Activated naive CD4-positive, alpha-beta T cell treated with anti-CD3 and anti-CD28 coated beads for 36 hours (primary cell): ENCODE measurements at regions of chr14 and their contacts with region 1.

Region 1: DNA sequence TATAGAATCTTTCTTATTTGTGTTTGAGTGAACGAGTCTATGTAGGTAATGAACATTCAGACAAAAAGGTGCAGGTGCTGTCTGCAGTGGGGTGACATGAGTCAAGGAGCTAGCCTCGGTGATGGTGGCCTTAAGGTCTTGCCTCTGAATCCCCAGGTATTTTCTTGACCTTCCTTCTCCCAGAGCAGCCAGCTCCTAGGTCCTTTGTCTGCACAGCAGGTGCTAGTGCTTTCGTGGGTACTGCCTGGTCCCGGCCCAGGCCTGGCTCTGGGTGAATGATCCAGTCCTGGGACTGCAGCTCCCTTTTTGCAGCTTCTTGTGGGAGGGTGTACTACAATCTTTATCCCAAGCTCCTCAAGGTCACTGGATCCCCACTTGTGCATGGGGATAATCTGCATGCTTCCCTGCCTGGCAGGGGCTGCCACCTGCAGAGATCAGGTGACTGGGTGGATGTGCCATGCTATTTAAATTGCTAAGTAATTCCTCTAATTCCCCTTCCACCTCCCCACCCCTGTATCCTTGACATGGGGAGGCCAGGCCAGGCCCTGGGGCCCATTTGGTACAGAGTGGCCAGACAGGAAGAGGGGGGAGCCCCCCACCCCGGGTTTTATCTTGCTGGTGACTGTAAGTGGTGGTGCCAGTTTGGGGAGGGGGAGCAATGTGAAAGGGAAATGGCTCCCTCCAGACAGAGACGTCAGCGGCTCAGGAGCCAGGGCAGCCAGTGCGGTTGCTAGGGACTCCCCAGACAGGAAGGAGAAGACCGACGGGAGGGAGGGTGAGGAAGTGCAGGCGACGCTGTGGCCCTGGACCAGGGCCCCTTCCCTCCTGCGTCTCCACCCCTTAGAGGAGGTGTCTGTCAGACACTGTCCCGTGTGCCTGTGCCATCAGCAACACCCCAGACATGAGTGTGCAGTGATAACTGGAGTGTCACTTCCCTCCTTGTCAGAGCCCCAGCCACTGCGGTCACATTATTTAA is 6.7 kb downstream of the VASH1 start:
- DNase-seq: peak; percentile 91
- H3K4me3 Mint-ChIP-seq: peak overlapping the region; percentile 1
- H3K27ac Mint-ChIP-seq: peak overlapping the region; percentile 6
- H3K4me1 Mint-ChIP-seq: peaks cover 14% of the 10 kb centered on the region
- H3K27me3 Mint-ChIP-seq: peaks cover 21% of the 10 kb centered on the region

Region 2: DNA sequence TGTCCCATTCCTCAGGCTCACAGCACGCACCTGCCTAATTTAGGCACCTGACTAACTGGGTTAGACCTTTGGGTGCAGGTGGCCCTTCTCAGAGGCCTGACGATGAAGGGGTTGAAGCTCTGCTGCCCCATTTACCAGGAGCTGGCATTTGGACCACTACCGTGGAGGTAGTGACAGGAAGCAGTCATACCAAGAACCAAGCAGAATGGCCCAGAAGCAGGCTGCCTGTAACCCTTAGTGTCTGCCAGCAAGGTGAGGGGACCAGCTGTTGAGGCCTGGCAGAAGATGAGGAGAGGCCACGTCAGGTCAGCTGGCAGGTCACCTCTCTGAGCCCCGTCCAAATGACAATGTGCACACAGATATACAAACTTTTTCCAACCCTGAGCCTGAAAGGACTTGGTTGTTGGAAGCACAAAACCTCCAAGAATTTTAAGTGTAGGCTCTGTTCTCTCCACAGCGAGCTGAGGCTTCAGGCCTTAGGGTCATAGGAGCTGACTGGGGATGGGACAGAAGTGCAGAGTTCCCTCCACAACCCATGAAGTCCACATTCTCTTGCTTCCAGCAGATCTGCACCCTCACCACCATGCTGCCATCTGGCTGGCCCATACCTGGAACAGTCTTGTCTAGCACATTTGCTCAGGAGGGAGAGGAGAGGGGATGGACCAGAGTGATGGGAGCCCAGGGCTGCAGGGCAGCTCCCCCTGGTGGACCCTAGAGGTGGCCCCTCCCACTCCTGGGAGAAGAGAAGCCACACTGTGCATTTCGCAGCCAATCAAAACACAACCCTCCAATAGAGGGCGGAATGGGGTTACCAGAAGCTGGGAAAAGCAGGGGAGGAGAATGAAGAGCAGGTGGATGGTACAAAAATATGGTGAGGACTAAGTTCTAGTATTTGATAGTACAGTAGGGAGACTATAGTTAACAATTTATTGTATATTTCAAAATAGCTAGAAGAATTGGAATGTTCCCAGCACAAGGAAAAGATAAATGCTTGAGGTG is 16.6 kb after region 1 on chr14:
- CTCF ChIA-PET with region 1: interaction called, 19 read pairs
- intact Hi-C with region 1: no loop called
- DNase-seq: peak; percentile 80
- H3K4me3 Mint-ChIP-seq: no peak overlapping the region
- H3K27ac Mint-ChIP-seq: no peak overlapping the region
- H3K4me1 Mint-ChIP-seq: peaks cover 19% of the 10 kb centered on the region
- H3K27me3 Mint-ChIP-seq: no peaks in the 10 kb centered on the region